HepG2 (cell line): ENCODE measurements at regions of chr2 and their contacts with region 1.

Region 1: DNA sequence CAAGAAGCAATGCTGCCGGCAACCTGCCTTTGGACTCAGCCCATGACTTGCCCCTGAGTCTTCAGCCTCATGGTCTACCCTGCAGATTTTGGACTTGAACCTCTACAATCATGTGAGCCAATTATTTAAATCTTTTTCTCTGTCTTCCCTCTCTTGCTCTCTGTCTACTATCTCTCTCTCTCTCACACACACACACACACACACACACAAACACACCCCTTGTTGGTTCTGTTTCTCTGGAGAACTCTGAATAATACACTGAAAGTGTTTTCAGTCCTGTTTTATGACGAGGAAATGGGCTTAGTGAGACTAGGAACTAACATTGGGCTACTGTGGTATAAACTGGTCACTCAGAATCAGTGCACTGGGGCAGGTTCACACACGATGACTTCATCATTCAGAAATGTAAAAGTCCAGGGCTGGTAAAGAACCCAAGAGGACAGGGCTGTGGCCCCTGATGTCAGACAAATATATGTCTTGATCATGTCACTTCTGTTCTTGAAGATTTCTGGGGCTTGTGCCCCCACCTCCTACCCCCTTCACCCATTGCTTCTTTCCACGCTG is 266.1 kb upstream of the SIX2 start:
- DNase-seq: peak; percentile 82
- ATAC-seq: peak; percentile 62
- H3K4me3 ChIP-seq: peak overlapping the region in 1 of 3 experiments; percentile 12; a peak in 1 of 6 replicates
- H3K27ac ChIP-seq: no peak overlapping the region
- H3K4me1 ChIP-seq: peaks cover 85% of the 10 kb centered on the region
- H3K27me3 ChIP-seq: no peaks in the 10 kb centered on the region; a peak in 2 of 5 replicates
- CTCF ChIP-seq: no peak
- EP300 ChIP-seq: no peak
- POLR2A ChIP-seq: no peak
- RAD21 ChIP-seq: no peak

Region 2: GRCh38 chr2:44044281-44044720 is 1231.0 kb before region 1 on chr2:
- CTCF ChIA-PET with region 1: no interaction called
- POLR2A ChIA-PET with region 1: no interaction called
- in situ Hi-C with region 1: no loop called
- intact Hi-C with region 1: no loop called
- DNase-seq: peak; percentile 83
- ATAC-seq: peak; percentile 100
- H3K4me3 ChIP-seq: peak overlapping the region in 1 of 3 experiments; percentile 57; a peak in 1 of 6 replicates
- H3K27ac ChIP-seq: no peak overlapping the region
- H3K4me1 ChIP-seq: peaks cover 5% of the 10 kb centered on the region; the same call in 1 of the 2 replicates
- H3K27me3 ChIP-seq: peaks cover 0 to 11% of the 10 kb centered on the region in 2 experiments; a peak in 2 of 5 replicates
- CTCF ChIP-seq: peak; percentile 99
- EP300 ChIP-seq: no peak
- POLR2A ChIP-seq: no peak
- RAD21 ChIP-seq: peak; percentile 98

Region 3: GRCh38 chr2:45237850-45238542 is 37.3 kb before region 1 on chr2:
- CTCF ChIA-PET with region 1: no interaction called
- POLR2A ChIA-PET with region 1: interaction called, 14 read pairs
- in situ Hi-C with region 1: no loop called
- intact Hi-C with region 1: loop called (anchors 1 kb)
- DNase-seq: peak; percentile 83
- ATAC-seq: peak; percentile 96
- H3K4me3 ChIP-seq: no peak overlapping the region
- H3K27ac ChIP-seq: no peak overlapping the region
- H3K4me1 ChIP-seq: peaks cover 18% of the 10 kb centered on the region
- H3K27me3 ChIP-seq: no peaks in the 10 kb centered on the region; a peak in 2 of 5 replicates
- CTCF ChIP-seq: no peak
- EP300 ChIP-seq: peak in 1 of 2 experiments; percentile 57; a peak in 1 of 4 replicates
- POLR2A ChIP-seq: no peak
- RAD21 ChIP-seq: 0 out of 2 replicates have a peak, but pooled peaks have one; percentile 21

Region 4: GRCh38 chr2:45256867-45257641 is 18.3 kb before region 1 on chr2:
- CTCF ChIA-PET with region 1: no interaction called
- POLR2A ChIA-PET with region 1: interaction called, 85 read pairs
- in situ Hi-C with region 1: no loop called
- intact Hi-C with region 1: loop called (anchors 2 kb)
- DNase-seq: peak; percentile 75
- ATAC-seq: peak; percentile 88
- H3K4me3 ChIP-seq: peak overlapping the region; percentile 46 to 74 (median 53)
- H3K27ac ChIP-seq: no peak overlapping the region
- H3K4me1 ChIP-seq: peaks cover 66% of the 10 kb centered on the region
- H3K27me3 ChIP-seq: peaks cover 10 to 28% of the 10 kb centered on the region in 2 experiments; a peak in 4 of 5 replicates
- CTCF ChIP-seq: peak; percentile 30; the same call in 1 of the 2 replicates
- EP300 ChIP-seq: peak in 1 of 2 experiments; percentile 40; a peak in 1 of 4 replicates
- POLR2A ChIP-seq: no peak
- RAD21 ChIP-seq: no peak

Region 5: DNA sequence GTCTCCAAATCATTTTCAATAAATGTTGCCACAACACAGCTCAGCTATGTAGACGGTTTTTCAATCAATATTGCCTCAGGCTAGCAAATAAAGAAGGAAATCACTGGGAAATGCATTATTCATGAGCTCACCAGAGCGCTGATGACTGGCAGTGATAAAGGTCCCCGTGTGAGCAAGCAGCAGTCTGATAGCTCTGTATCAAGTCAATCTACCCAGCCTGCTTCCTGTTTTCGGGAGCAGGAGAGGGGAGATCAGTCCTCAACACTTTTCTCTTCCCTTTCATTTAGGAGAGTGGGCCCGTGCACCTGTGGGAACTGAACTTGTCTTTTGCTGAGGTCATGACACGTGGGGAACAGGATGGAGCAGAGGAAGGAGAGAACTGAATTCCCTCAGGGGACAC is 12.2 kb before region 1 on chr2:
- CTCF ChIA-PET with region 1: no interaction called
- POLR2A ChIA-PET with region 1: interaction called, 85 read pairs
- in situ Hi-C with region 1: no loop called
- intact Hi-C with region 1: no loop called
- DNase-seq: no peak
- ATAC-seq: no peak
- H3K4me3 ChIP-seq: no peak overlapping the region
- H3K27ac ChIP-seq: no peak overlapping the region
- H3K4me1 ChIP-seq: peaks cover 73% of the 10 kb centered on the region
- H3K27me3 ChIP-seq: peaks cover 14 to 54% of the 10 kb centered on the region in 2 experiments; a peak in 4 of 5 replicates
- CTCF ChIP-seq: no peak
- EP300 ChIP-seq: no peak
- POLR2A ChIP-seq: no peak
- RAD21 ChIP-seq: no peak

Region 6: DNA sequence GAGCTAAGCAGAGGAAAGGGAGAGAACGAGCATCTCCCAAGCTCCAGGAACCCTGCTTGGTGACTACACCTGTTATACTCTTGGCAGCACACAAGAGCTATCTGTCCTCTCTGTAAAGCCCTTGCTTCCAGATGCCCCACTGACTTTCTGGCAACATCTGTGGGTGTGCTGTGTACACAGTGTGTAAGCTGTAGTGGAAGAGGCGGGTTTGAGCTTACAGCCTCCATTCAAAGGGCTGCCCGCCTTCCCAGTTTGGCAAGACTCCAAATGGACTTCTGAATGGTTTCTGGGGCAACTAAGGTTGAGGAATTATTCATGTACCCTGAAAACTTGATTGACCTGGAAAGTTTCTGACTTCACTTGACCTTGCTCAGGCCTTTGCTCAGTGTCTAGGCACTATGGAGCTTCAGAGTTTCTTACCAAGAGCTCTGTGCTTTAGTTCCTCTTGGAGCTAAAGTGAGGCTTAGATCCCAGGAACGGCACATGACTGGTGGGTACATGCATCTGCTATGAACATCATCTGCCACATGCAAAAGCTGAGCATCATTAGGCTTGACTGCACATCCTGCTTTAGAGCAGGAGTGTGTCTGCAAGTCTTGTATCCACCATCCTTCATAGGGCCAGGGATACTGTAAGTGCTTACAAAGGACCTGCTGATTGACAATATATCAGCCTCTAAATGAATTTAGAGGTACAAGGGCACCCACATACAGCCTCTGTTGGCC is 24.9 kb after region 1 on chr2:
- CTCF ChIA-PET with region 1: no interaction called
- POLR2A ChIA-PET with region 1: interaction called, 7 read pairs
- in situ Hi-C with region 1: no loop called
- intact Hi-C with region 1: loop called (anchors 1 kb)
- DNase-seq: peak; percentile 84
- ATAC-seq: peak; percentile 92
- H3K4me3 ChIP-seq: no peak overlapping the region
- H3K27ac ChIP-seq: no peak overlapping the region
- H3K4me1 ChIP-seq: peaks cover 17% of the 10 kb centered on the region
- H3K27me3 ChIP-seq: peaks cover 1 to 32% of the 10 kb centered on the region in 2 experiments; a peak in 3 of 5 replicates
- CTCF ChIP-seq: no peak
- EP300 ChIP-seq: peak in 1 of 2 experiments; percentile 22; a peak in 1 of 4 replicates
- POLR2A ChIP-seq: no peak
- RAD21 ChIP-seq: no peak

Region 7: DNA sequence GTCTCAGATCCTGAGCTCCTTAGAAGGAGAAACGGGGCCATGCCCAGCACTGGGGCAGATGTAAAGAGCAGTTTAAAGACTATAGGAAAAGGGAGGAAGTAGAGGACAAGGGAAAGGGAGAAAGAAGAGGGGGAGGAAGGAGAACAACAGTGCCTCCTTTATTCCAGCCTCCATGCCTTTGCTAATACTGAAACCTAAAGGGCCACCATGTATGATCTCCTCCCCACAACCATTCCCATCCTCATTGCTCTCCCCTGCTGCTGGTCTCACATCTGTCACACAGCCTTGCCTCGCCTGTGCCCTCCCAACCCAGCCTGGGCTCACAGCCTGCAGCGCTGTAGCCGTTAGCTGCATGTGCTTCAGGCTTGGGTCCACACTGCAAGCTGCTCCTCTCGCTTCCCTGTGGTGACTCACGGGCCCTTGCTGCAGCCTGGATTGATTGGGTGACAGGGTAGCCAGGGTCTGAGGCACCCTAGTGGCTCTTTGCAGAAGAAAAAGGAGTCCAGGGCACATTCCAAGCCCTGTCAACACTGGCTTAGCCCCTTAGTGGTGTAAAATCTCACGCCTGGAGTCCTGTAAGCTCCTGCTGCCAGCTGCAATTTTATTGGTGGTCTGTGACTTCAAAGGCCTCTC is 53.8 kb after region 1 on chr2:
- CTCF ChIA-PET with region 1: no interaction called
- POLR2A ChIA-PET with region 1: interaction called, 22 read pairs
- in situ Hi-C with region 1: no loop called
- intact Hi-C with region 1: loop called (anchors 1 kb)
- DNase-seq: peak; percentile 67
- ATAC-seq: peak; percentile 92
- H3K4me3 ChIP-seq: no peak overlapping the region
- H3K27ac ChIP-seq: no peak overlapping the region
- H3K4me1 ChIP-seq: peaks cover 49% of the 10 kb centered on the region
- H3K27me3 ChIP-seq: peaks cover 4 to 51% of the 10 kb centered on the region in 2 experiments; a peak in 4 of 5 replicates
- CTCF ChIP-seq: peak; percentile 60
- EP300 ChIP-seq: no peak
- POLR2A ChIP-seq: no peak
- RAD21 ChIP-seq: peak; percentile 60

Region 8: GRCh38 chr2:45469314-45470099 is 194.2 kb after region 1 on chr2:
- CTCF ChIA-PET with region 1: no interaction called
- POLR2A ChIA-PET with region 1: no interaction called
- in situ Hi-C with region 1: no loop called
- intact Hi-C with region 1: loop called (anchors 1 kb)
- DNase-seq: peak; percentile 97
- ATAC-seq: peak; percentile 99
- H3K4me3 ChIP-seq: no peak overlapping the region
- H3K27ac ChIP-seq: peak overlapping the region; percentile 66
- H3K4me1 ChIP-seq: peaks cover 26% of the 10 kb centered on the region
- H3K27me3 ChIP-seq: no peaks in the 10 kb centered on the region
- CTCF ChIP-seq: no peak
- EP300 ChIP-seq: peak; percentile 92 to 94
- POLR2A ChIP-seq: no peak
- RAD21 ChIP-seq: no peak